Right ventricle myocardium inferior (tissue), 1 donor: ENCODE measurements at regions of chr6 and their contacts with region 1.

Region 1: GRCh38 chr6:125584468-125585029 is 164.9 kb upstream of the HEY2 start:
- DNase-seq: peak; percentile 64
- ATAC-seq: peak; percentile 84

Region 2: GRCh38 chr6:125480571-125480970 is 104.0 kb before region 1 on chr6:
- intact Hi-C with region 1: no loop called
- DNase-seq: no peak
- ATAC-seq: no peak

Region 3: DNA sequence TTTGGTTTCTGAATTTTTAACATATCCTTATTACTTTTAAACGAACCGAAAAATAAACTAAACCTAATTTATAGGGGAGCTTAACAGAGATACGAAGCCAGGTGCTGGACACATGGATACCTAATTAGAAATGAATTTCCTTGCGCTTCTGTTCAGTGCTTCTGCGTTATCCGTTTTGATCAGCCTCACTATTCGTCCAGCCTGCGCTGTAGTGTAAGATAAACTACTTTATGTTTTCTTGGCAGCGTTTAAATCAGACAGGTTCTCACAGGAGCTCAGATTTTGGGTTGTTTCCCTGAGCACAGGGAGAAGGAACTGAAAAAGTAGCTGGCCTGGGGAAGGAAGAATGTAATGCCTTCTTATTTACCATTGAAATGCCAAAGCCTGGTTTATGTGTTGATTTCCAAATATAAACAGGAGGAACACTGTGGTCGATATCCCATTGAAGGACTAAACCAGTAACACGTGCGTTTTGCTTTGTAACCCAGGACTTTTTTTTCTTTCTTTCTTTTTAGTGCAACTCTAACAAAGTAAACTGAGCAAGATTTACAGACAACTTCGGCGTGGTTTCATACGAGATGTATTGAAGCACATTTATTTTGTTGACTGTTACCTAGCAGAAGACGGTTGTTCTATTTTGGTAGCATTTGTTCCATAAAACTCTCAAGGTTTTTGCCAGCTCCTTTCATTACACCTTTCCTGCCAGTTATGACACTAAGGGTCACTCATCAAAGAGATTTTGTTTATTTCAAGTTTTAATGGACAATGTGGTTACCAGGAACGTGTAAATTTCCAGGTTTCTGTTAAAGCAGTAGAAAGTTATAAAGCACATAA is 49.9 kb before region 1 on chr6:
- intact Hi-C with region 1: loop called (anchors 5 kb)
- DNase-seq: no peak
- ATAC-seq: no peak